HCT116 (cell line): ENCODE measurements at regions of chr7 and their contacts with region 1.

Region 1: DNA sequence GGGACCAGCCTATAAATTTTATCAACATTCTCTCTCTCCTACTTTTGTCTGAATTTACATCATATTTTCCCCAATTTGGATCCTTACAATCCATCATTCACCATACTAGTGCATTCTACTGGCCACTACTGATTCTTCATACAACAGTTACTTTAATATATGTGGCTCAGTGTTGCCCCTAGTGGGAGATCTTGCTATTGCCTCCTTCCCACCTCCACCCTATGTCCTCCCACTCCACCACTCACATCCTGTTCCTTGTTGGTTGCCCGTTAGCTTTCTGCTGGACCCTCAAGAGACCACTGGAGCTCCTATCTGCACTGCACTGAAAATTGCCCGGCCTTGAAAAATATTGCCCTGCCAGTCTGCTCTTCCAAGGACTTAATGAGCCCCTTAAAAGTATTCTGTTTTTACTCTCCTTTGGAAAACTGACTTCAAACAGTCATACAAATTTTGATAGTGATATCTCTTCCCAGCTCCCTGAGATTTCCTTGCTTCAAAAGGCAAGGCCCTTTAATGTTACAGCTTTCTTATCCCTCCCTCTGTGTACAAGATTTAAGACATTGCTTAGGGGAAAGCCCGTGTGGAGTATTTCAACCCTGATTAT is 243.3 kb upstream of the TMEM229A start:
- DNase-seq: peak; percentile 45
- ATAC-seq: peak; percentile 100
- H3K4me3 ChIP-seq: no peak overlapping the region
- H3K27ac ChIP-seq: no peak overlapping the region
- H3K4me1 ChIP-seq: no peaks in the 10 kb centered on the region
- H3K27me3 ChIP-seq: no peaks in the 10 kb centered on the region
- CTCF ChIP-seq: peak; percentile 59 to 77 (median 72); a peak in 5 of 6 replicates
- POLR2A ChIP-seq: no peak
- RAD21 ChIP-seq: peak; percentile 48; the same call in 1 of the 2 replicates

Region 2: DNA sequence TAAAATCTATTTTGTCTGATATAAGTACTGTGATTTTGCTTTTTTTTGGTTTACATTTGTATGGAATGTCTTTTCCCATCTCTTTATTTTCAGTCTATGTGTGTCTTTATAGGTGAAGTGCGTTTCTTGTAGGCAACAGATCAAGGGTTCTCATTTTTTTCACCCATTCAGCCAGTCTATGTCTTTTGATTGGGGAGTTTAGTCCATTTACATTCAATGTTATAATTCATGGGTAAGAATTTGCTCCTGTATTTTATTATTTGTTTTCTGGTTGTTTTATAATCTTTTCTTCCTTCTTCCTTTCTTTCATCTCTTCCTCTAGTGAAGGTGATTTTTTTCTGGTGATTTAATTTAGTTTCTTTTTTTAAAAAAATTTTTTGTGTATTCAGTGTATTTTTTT is 138.5 kb before region 1 on chr7:
- CTCF ChIA-PET with region 1: no interaction called
- POLR2A ChIA-PET with region 1: no interaction called
- RAD21 ChIA-PET with region 1: no interaction called
- intact Hi-C with region 1: no loop called
- DNase-seq: no peak
- ATAC-seq: no peak
- H3K4me3 ChIP-seq: no peak overlapping the region
- H3K27ac ChIP-seq: no peak overlapping the region
- H3K4me1 ChIP-seq: no peaks in the 10 kb centered on the region
- H3K27me3 ChIP-seq: no peaks in the 10 kb centered on the region
- CTCF ChIP-seq: no peak
- POLR2A ChIP-seq: no peak
- RAD21 ChIP-seq: no peak

Region 3: GRCh38 chr7:124779194-124779593 is 503.1 kb after region 1 on chr7:
- CTCF ChIA-PET with region 1: no interaction called
- POLR2A ChIA-PET with region 1: no interaction called
- RAD21 ChIA-PET with region 1: no interaction called
- intact Hi-C with region 1: loop called (anchors 10 kb)
- DNase-seq: no peak
- ATAC-seq: no peak
- H3K4me3 ChIP-seq: no peak overlapping the region
- H3K27ac ChIP-seq: no peak overlapping the region
- H3K4me1 ChIP-seq: no peaks in the 10 kb centered on the region
- H3K27me3 ChIP-seq: no peaks in the 10 kb centered on the region
- CTCF ChIP-seq: no peak
- POLR2A ChIP-seq: no peak
- RAD21 ChIP-seq: no peak